HEK293 (cell line): ENCODE measurements at regions of chr17 and their contacts with region 1.

Region 1: GRCh38 chr17:31888124-31888523 is 13.4 kb downstream of the UTP6 start:
- H3K4me3 ChIP-seq: no peak overlapping the region
- H3K27ac ChIP-seq: no peak overlapping the region
- H3K4me1 ChIP-seq: no peaks in the 10 kb centered on the region
- CTCF ChIP-seq: no peak

Region 2: DNA sequence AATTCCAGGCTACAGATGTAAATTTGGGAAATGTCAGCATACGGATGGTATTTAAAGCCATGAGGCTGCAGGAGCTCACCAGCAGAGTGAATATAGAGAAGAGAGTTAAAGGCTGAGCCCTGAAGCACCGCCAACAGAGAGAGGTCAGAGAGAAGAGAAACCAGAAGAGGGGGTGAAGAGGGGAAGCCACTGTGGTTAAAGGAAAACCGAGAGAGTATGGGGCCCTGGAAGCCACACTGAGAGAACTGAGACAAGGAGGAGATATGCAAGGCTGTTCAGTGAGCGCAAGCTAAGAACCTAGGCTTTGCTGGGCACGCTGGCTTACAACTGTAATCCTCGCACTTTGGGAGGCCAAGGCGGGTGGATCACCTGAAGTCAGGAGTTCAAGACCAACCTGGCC is 53.7 kb before region 1 on chr17:
- CTCF ChIA-PET with region 1: no interaction called
- POLR2A ChIA-PET with region 1: no interaction called
- H3K4me3 ChIP-seq: no peak overlapping the region
- H3K27ac ChIP-seq: no peak overlapping the region
- H3K4me1 ChIP-seq: no peaks in the 10 kb centered on the region
- CTCF ChIP-seq: no peak

Region 3: GRCh38 chr17:31900877-31901276 is 12.8 kb after region 1 on chr17:
- CTCF ChIA-PET with region 1: interaction called, 4 read pairs
- POLR2A ChIA-PET with region 1: interaction called, 11 read pairs
- H3K4me3 ChIP-seq: peak overlapping the region; percentile 94
- H3K27ac ChIP-seq: peak overlapping the region; percentile 80
- H3K4me1 ChIP-seq: no peaks in the 10 kb centered on the region; the same call in none of the 2 replicates
- CTCF ChIP-seq: no peak